ENCODE measurements at regions of chr17 and their contacts with region 1.

Region 1: GRCh38 chr17:7429722-7430121 is 1.1 kb downstream of the SPEM3 start:
- DNase-seq: no peak
- H3K4me3 ChIP-seq: no peak overlapping the region
- H3K4me3 Mint-ChIP-seq: no peak overlapping the region
- H3K27ac ChIP-seq: no peak overlapping the region
- H3K27ac Mint-ChIP-seq: no peak overlapping the region
- H3K4me1 ChIP-seq: peaks cover 0 to 3% of the 10 kb centered on the region in 2 donors
- H3K4me1 Mint-ChIP-seq: peaks cover under 1% of the 10 kb centered on the region
- H3K27me3 ChIP-seq: no peaks in the 10 kb centered on the region
- H3K27me3 Mint-ChIP-seq: peaks cover 0 to 3% (median 0%) of the 10 kb centered on the region in 3 donors
- CTCF ChIP-seq: no peak

Region 2: GRCh38 chr17:7384489-7385081 is 45.1 kb before region 1 on chr17:
- intact Hi-C with region 1: loop called in 1 of 2 experiments (anchors 5 kb)
- DNase-seq: no peak
- H3K4me3 ChIP-seq: peak overlapping the region in 2 of 3 experiments; percentile 8 to 69
- H3K4me3 Mint-ChIP-seq: peak overlapping the region; percentile 62 to 76
- H3K27ac ChIP-seq: no peak overlapping the region
- H3K27ac Mint-ChIP-seq: peak overlapping the region in 2 of 7 donors; percentile 11 to 69
- H3K4me1 ChIP-seq: peaks cover 16 to 23% of the 10 kb centered on the region in 2 donors
- H3K4me1 Mint-ChIP-seq: peaks cover 18% of the 10 kb centered on the region
- H3K27me3 ChIP-seq: peaks cover 33 to 52% of the 10 kb centered on the region in 2 donors
- H3K27me3 Mint-ChIP-seq: peaks cover 45 to 59% (median 57%) of the 10 kb centered on the region in 3 donors
- CTCF ChIP-seq: no peak

Region 3: DNA sequence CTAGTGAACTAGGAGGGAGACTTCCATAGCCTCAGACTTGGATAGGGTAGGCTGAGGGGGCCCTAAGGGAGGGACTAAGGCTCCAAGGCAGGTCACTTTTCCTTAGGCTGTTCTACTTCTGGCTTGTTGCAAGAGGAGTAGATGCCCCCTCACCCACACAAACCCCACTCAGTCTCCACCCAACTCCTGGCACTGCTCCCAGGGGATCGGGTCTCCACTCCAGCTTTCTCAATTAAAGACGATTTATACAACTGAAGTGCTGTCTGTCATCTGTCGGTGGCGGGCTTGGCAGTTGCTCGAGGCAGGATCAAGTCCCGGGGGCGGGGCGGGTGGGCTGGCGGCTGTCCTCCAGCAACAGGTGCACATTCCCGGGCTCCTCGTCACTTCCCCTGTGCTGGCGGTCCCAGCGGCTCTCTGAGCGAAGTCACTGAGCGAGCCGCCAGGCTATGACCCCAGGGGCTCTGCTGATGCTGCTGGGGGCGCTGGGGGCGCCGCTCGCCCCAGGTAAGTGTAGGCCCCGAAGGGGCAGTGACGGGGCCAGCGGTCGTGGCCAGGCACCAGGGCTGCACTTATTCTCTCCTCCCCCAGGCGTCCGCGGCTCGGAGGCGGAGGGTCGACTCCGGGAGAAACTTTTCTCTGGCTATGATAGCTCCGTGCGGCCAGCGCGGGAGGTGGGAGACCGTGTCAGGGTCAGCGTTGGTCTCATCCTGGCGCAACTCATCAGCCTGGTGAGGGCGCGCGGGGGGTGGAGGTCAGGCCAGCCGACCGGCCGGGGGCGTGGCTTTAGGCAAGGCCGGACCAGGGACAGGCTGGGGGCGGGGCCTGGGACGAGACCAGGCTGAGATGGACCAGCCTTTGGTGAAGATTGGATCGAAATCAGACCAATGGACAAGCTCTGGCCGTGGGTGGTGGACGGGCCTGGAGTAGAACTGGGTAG is 15.2 kb after region 1 on chr17 and contains the start of gene CHRNB1:
- intact Hi-C with region 1: no loop called
- DNase-seq: peak; percentile 66 to 72 (median 68)
- H3K4me3 ChIP-seq: peak within 1 kb of the TSS; percentile 9 to 72 (median 44)
- H3K4me3 Mint-ChIP-seq: peak within 1 kb of the TSS; percentile 78 to 94
- H3K27ac ChIP-seq: no peak within 1 kb of the TSS
- H3K27ac Mint-ChIP-seq: peak within 1 kb of the TSS in 3 of 7 donors; percentile 30 to 66 (median 58)
- H3K4me1 ChIP-seq: peaks cover 25 to 27% of the 10 kb centered on the region in 2 donors
- H3K4me1 Mint-ChIP-seq: peaks cover 30% of the 10 kb centered on the region
- H3K27me3 ChIP-seq: peaks cover 43 to 86% of the 10 kb centered on the region in 2 donors
- H3K27me3 Mint-ChIP-seq: peaks cover 80 to 94% (median 92%) of the 10 kb centered on the region in 3 donors
- CTCF ChIP-seq: no peak
- polyA plus RNA-seq, gene CHRNB1: 9.3 to 15.7 (median 14.7) TPM